Tibial artery (tissue), 4 donors: ENCODE measurements at regions of chr9 and their contacts with region 1.

Region 1: DNA sequence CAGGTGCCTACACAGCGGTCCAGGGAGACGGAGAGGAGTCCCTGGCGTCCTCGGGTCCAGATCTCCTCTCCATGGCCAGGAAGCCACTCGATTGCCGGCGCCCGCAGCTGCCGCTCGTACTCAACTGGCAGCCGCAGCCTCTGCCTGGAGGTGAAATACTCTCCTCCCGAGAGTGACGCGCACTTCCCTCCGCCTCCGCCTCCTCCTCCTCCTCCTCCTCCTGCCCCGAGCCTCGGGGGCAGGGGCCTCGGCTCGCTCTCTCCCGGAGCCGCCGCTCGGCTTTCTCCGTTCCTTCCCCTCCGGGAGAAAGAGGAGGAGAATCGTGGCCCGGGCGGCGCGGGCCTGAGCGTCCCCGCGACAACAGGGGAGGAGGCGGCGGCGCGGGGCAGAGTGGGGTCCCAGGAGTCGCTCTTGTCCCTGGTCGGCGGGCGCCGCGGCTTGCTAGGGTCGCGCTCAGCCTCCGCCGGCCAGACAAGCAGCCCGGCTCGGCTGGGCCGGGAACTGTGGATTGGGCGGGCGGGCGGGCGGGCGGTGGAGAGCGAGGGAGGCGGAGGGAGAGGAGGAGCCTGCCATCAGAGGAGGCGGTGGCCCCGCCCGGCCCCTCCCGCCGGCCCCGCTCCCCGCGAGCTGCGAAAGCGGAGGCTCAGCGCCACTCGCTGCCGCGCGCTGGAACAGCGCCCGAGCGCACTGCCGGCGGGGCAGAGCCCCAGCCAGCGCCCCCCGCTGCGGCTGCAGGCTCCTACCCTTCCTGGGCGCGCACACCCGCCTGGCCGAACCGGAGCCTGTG is at the start of gene CEMIP2:
- DNase-seq: peak; percentile 87 to 94
- H3K4me3 ChIP-seq: peak within 1 kb of the TSS; percentile 59 to 80
- H3K27ac ChIP-seq: peak within 1 kb of the TSS; percentile 90 to 94
- H3K4me1 ChIP-seq: peaks cover 0 to 43% (median 22%) of the 10 kb centered on the region in 4 donors
- H3K27me3 ChIP-seq: no peaks in the 10 kb centered on the region
- CTCF ChIP-seq: peak; percentile 10 to 42

Region 2: GRCh38 chr9:71326360-71326759 is 442.2 kb before region 1 on chr9:
- intact Hi-C with region 1: no loop called
- DNase-seq: no peak
- H3K4me3 ChIP-seq: no peak overlapping the region
- H3K27ac ChIP-seq: no peak overlapping the region
- H3K4me1 ChIP-seq: no peaks in the 10 kb centered on the region
- H3K27me3 ChIP-seq: no peaks in the 10 kb centered on the region
- CTCF ChIP-seq: no peak

Region 3: DNA sequence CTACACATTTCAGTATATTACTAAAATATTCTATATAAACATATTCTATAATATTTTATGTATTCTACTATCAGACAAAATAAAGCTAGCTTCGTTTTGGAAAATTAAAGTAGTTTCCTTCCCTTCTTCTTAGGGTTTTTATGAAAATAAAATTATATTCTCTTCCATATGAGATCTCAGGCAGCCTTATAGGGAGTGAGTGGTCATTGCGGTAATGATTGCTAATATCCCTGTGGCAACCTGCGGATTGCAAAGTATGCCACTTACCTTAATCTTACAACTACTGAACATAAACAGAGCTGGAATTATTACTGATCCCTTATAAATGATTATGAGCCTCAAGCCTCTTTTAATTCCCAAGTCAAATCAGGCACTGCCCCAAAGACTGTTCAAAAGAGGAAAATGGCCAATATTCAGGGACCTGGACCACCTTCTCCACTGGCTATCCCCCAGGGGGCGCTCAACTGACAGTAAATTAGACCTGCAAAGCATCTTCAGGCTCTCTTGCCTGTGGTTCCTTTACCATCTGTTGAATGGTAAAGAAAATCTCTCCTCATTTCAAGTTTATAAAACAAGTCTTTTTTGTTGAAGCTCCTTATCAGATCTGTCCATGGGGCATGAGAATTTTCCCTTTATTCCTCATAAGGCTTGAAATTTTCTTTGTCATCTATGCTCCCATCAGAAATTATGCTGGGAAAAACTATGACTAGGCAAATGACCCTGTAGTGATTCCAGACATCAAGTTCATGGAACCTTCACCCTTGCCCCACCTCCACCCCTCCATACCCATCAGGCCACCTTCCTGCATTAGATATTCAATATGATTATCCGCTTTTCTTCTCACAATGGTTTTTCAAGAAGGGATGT is 164.2 kb before region 1 on chr9:
- intact Hi-C with region 1: loop called (anchors 10 kb)
- DNase-seq: peak; percentile 65 to 74
- H3K4me3 ChIP-seq: no peak overlapping the region
- H3K27ac ChIP-seq: no peak overlapping the region
- H3K4me1 ChIP-seq: no peaks in the 10 kb centered on the region
- H3K27me3 ChIP-seq: no peaks in the 10 kb centered on the region
- CTCF ChIP-seq: peak; percentile 42 to 50

Region 4: DNA sequence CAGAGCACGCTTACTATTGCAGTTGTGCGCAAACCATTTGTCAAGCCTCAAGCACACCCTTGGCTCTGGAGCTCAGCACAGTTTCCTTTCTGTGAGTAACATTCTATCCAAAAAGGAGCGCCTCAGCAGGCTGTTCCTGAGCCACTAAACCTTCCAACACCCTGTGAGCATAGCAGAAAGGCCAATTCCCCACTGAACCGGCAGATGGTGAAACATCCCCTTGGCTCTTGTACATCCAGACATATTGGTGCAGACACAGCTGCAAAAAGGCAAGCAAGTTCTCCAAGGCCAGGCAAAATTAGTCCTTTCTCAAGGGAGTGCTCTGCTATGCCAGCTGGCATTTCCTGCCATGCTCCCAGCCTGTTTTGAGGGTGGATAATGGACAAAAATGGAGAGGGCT is 43.8 kb after region 1 on chr9:
- intact Hi-C with region 1: loop called (anchors 5 kb)
- DNase-seq: peak; percentile 33 to 83
- H3K4me3 ChIP-seq: no peak overlapping the region
- H3K27ac ChIP-seq: peak overlapping the region; percentile 8 to 64
- H3K4me1 ChIP-seq: peaks cover 0 to 56% (median 30%) of the 10 kb centered on the region in 4 donors
- H3K27me3 ChIP-seq: no peaks in the 10 kb centered on the region
- CTCF ChIP-seq: peak; percentile 42